Ascending aorta (tissue), 2 donors: ENCODE measurements at regions of chr14 and their contacts with region 1.

Region 1: GRCh38 chr14:66401449-66402095 is 84.6 kb upstream of the CCDC196 start:
- DNase-seq: no peak
- H3K4me3 ChIP-seq: no peak overlapping the region
- H3K27ac ChIP-seq: no peak overlapping the region
- H3K4me1 ChIP-seq: no peaks in the 10 kb centered on the region
- H3K27me3 ChIP-seq: no peaks in the 10 kb centered on the region
- CTCF ChIP-seq: no peak

Region 2: GRCh38 chr14:65117769-65118701 is 1283.5 kb before region 1 on chr14:
- intact Hi-C with region 1: no loop called
- DNase-seq: no peak
- H3K4me3 ChIP-seq: no peak overlapping the region
- H3K27ac ChIP-seq: no peak overlapping the region
- H3K4me1 ChIP-seq: no peaks in the 10 kb centered on the region
- H3K27me3 ChIP-seq: no peaks in the 10 kb centered on the region
- CTCF ChIP-seq: no peak

Region 3: GRCh38 chr14:66273261-66273832 is 128.2 kb before region 1 on chr14:
- intact Hi-C with region 1: no loop called
- DNase-seq: no peak
- H3K4me3 ChIP-seq: no peak overlapping the region
- H3K27ac ChIP-seq: no peak overlapping the region
- H3K4me1 ChIP-seq: no peaks in the 10 kb centered on the region
- H3K27me3 ChIP-seq: no peaks in the 10 kb centered on the region
- CTCF ChIP-seq: no peak

Region 4: DNA sequence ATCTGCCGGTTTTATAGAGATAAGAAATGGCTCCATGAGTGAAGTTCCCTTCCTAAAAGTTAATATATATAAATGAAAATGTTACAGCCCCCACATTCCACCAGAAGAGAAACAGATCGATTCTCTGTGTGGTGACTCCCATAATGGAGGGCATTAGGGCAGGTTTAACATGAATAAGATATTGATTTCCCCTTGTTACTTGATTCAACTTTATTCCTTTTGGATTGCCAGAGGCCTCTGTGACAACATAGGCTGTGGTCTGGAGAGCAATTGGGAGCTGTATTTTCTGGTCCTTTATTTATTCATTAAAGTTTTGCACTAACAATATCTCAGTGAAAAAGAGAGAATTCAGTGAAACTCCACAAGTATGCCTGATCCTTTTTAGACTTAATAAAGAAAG is 40.6 kb before region 1 on chr14:
- intact Hi-C with region 1: loop called (anchors 1 kb)
- DNase-seq: no peak
- H3K4me3 ChIP-seq: no peak overlapping the region
- H3K27ac ChIP-seq: no peak overlapping the region
- H3K4me1 ChIP-seq: no peaks in the 10 kb centered on the region
- H3K27me3 ChIP-seq: no peaks in the 10 kb centered on the region
- CTCF ChIP-seq: no peak

Region 5: DNA sequence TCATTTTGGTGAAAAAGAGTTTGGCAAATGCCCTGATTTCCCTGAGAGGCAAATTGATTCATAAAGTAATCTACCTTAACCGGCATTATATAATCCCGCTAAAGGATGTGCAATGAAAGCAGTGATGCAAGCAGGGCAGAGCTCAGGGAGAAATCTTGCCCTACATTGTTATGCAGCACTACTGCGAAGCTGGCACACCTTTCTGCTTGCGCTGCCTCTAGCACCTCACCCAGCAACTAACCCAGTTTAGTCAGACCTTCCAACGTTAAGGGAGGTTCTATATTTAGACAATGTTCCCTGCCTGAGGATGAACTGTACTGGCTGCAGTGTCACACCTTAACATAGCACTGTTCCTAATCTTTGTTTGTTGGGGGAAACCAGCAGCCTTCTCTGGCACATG is 23.8 kb after region 1 on chr14:
- intact Hi-C with region 1: no loop called
- DNase-seq: no peak
- H3K4me3 ChIP-seq: no peak overlapping the region
- H3K27ac ChIP-seq: no peak overlapping the region
- H3K4me1 ChIP-seq: no peaks in the 10 kb centered on the region
- H3K27me3 ChIP-seq: no peaks in the 10 kb centered on the region
- CTCF ChIP-seq: no peak